ENCODE measurements at regions of chr11 and their contacts with region 1.

Region 1: DNA sequence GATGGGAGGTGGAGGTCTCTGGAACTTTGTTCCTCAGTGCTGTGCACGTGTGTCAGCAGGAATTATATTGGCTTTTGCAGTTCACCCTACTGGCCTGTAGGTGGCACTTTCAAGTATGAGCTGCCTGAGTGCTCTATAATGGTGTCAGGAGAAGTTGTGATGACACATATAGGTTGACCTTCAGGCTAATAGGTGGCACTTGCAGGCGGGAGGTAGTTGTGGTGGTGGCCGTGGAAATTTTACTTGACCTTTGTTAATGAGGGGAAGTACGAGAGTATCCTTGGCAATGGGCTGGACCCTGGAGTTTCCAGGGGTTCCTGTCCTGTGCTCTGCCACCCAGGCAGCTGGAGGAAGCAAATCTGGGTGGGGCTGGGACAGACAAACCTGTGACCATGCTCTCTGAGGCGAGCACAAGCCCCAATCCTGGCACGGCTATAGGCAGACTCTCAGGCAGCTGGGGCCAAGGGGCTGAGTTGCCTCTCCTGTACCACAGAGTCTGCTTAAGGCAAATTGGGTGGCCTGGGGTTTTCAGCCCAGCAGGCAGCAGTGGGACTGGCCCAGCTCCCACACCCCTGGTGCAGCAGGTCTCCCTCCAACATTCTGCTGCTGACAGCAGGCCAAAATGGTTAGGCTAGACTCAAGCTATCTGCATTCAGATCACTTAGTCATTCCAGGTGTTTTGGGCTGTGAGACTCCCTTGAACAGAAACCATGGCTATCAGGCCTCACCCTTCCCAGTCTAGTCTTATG is 147.5 kb upstream of the CTSC start:
- DNase-seq: no peak
- ATAC-seq: peak in 1 of 4 donors; percentile 53
- H3K4me3 ChIP-seq: no peak overlapping the region
- H3K27ac ChIP-seq: no peak overlapping the region
- H3K4me1 ChIP-seq: no peaks in the 10 kb centered on the region
- H3K27me3 ChIP-seq: no peaks in the 10 kb centered on the region
- CTCF ChIP-seq: peak; percentile 22 to 69 (median 52)
- POLR2A ChIP-seq: no peak

Region 2: GRCh38 chr11:88421530-88421929 is 63.5 kb before region 1 on chr11:
- intact Hi-C with region 1: loop called in 1 of 10 experiments (anchors 10 kb)
- DNase-seq: peak in 2 of 5 donors; percentile 39 to 45
- ATAC-seq: peak; percentile 57 to 80 (median 73)
- H3K4me3 ChIP-seq: peak overlapping the region in 1 of 12 donors; percentile 20
- H3K27ac ChIP-seq: peak overlapping the region; percentile 9 to 97 (median 64)
- H3K4me1 ChIP-seq: peaks cover 0 to 51% (median 5%) of the 10 kb centered on the region in 12 donors
- H3K27me3 ChIP-seq: no peaks in the 10 kb centered on the region
- CTCF ChIP-seq: no peak
- POLR2A ChIP-seq: no peak